ENCODE measurements at regions of chr16 and their contacts with region 1.

Region 1: DNA sequence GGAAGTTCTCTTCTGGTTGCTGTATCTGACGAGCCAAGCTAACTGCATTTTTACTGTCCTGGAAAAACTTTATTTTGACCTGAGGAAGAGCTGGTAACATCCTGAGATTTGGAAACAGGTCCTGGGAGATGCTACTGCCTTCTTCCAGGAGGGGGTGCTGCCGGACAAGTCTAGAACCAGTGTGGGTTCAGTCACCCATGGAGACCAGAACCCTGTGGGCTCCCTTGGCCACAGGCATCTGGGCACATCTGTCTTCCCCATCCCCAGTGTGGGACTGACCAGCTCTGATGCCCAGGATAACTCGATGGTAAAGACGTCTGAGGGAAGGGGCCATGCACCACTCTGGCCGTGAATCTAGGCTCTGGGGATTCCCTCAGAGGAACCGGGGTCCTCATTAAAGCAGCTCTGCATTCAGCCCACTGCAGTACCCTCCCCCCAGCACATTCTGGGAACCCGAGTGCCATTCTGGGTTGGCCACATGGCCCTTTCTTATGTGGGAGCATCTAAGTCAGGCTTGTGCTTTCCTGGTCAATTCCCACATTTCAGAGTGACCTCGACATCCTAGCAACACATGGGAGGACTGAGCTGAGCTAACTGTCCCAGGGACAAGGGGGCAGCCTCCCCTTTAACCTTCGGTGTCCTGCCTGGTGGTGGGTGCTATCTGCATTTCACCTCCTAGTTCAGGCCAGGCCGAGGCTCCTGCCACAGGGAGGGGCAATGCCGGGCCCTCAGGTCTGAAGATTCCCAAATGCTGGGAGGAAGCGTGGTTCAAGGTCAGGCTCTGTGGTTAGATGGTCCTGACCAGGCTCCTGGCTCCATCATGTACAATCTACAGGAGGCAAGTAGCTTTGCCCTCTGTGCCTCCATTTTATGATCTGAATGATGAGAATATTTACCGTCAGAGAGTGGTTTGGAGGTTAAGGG is 6.4 kb downstream of the C16orf86 start:
- DNase-seq: peak; percentile 88
- CTCF ChIP-seq: peak; percentile 87

Region 2: GRCh38 chr16:67628216-67628615 is 44.8 kb before region 1 on chr16:
- in situ Hi-C with region 1: no loop called
- DNase-seq: no peak
- CTCF ChIP-seq: no peak

Region 3: GRCh38 chr16:67750466-67750865 is 77.5 kb after region 1 on chr16:
- in situ Hi-C with region 1: no loop called
- DNase-seq: no peak
- CTCF ChIP-seq: no peak

Region 4: GRCh38 chr16:67816240-67817031 is 143.4 kb after region 1 on chr16:
- in situ Hi-C with region 1: loop called (anchors 10 kb)
- DNase-seq: peak; percentile 91
- CTCF ChIP-seq: peak; percentile 100

Region 5: GRCh38 chr16:68064791-68065365 is 391.9 kb after region 1 on chr16:
- in situ Hi-C with region 1: loop called (anchors 25 kb)
- DNase-seq: peak; percentile 71
- CTCF ChIP-seq: peak; percentile 90

Measured in GM13977 (cell line).